Mammary epithelial cell (primary cell): ENCODE measurements at regions of chr4 and their contacts with region 1.

Region 1: DNA sequence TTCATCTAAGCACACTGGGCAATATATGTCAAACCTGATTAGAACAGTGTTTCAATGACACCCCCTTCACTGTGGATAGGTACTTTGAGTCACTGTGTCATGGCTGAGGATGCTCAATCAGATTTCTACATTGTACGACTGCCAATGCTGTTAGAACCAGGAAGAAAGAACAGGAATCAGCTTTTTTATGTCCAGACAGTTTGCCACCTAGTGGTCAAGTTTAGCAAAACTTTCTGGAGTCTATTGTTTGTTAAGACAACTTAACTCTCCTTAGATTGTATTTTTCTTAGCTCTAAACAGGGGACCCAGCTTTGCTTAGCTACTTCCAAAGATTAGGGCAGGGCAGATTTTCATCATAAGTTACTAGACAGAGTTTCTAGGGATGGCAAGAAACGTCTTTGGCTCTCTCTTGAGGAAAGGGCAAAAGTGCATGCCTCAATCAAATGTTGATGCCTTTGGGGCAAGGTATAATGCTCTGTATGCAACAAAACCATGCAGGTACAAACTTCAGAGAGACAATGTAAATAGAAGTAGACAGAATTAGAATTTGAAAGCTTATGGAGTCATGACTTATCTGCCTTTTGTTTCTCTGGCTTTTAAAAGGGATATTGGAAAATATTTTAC is 40.5 kb upstream of the BMP3 start:
- DNase-seq: peak; percentile 39
- H3K4me3 ChIP-seq: no peak overlapping the region
- H3K27ac ChIP-seq: no peak overlapping the region
- H3K4me1 ChIP-seq: no peaks in the 10 kb centered on the region
- H3K27me3 ChIP-seq: no peaks in the 10 kb centered on the region
- CTCF ChIP-seq: peak; percentile 63 to 68

Region 2: GRCh38 chr4:80610845-80611677 is 379.0 kb before region 1 on chr4:
- CTCF ChIA-PET with region 1: no interaction called
- dilution Hi-C with region 1: no loop called
- in situ Hi-C with region 1: loop called (anchors 25 kb)
- intact Hi-C with region 1: no loop called
- DNase-seq: peak; percentile 37
- H3K4me3 ChIP-seq: no peak overlapping the region
- H3K27ac ChIP-seq: no peak overlapping the region
- H3K4me1 ChIP-seq: no peaks in the 10 kb centered on the region
- H3K27me3 ChIP-seq: peaks cover 2% of the 10 kb centered on the region
- CTCF ChIP-seq: no peak

Region 3: GRCh38 chr4:80619070-80619674 is 370.9 kb before region 1 on chr4:
- CTCF ChIA-PET with region 1: no interaction called
- dilution Hi-C with region 1: no loop called
- in situ Hi-C with region 1: loop called (anchors 25 kb)
- intact Hi-C with region 1: loop called (anchors 1 kb)
- DNase-seq: peak; percentile 1
- H3K4me3 ChIP-seq: no peak overlapping the region
- H3K27ac ChIP-seq: no peak overlapping the region
- H3K4me1 ChIP-seq: no peaks in the 10 kb centered on the region
- H3K27me3 ChIP-seq: peaks cover 4% of the 10 kb centered on the region
- CTCF ChIP-seq: peak; percentile 22 to 59